Left cardiac atrium (tissue), 4 donors: ENCODE measurements at regions of chr5 and their contacts with region 1.

Region 1: DNA sequence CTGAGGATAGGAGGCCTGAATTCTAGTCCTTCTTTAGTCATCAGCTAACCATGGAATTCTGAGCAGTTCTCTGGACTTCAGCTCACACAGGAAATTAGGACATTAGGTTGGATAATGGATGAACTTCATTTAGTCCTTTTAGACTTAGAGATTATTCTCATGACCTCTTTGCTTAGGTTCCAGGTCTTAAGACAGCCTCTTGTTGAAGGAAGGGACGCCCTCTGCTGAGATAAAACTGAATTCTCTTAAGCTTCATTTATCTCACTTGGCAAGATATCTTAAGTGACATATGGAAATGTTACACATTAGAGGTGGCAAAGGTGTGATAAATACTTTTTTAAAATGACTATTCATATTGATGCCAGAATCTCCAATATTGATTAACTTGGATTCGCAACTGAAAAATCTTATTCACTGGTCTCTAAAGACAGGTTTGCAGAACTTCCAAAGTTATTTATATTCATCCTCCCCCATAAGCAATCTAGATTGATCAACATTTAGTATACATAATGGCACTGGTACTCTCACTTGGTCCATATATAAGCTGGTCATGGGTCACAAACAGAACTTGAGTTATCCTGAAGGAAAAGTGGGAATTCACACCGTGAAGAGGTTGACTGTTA is 16.9 kb upstream of the ZNF366 start:
- DNase-seq: no peak
- ATAC-seq: peak; percentile 68 to 76

Region 2: DNA sequence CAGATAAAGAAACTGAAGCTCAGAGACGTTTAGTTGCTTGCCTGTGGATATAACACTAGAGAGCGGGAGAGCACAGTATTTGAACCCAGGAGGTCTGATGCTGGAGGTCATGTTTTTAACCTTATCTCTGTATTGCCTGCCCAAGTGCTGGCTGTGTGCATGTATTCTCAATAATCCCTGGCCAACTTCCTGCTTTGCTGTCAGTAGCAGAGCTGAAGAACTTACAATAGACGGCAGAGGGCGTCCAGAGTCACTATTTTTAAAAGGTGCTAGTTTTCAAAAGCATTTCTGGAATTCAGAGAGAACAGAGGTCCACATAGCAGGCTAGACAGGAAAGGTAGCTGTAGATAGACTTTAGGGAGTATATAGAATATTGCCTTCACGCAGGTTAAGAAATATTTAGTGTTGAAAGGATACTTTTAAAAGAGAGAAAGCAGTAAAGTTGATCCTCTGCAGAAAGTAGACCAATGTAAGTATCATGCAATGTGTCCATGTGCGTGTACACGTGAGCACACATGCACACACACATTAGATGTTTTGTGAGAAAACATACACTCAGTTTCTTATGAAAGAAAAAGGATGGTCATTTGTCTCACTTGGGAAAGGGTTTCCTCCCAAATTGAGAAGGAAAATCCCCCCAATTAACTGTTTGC is 157.6 kb before region 1 on chr5:
- intact Hi-C with region 1: loop called (anchors 2 kb)
- DNase-seq: peak; percentile 71
- ATAC-seq: peak; percentile 87 to 91

Region 3: GRCh38 chr5:72569408-72569944 is 45.4 kb after region 1 on chr5:
- intact Hi-C with region 1: no loop called
- DNase-seq: no peak
- ATAC-seq: no peak

Region 4: GRCh38 chr5:72702871-72703434 is 178.9 kb after region 1 on chr5:
- intact Hi-C with region 1: no loop called
- DNase-seq: no peak
- ATAC-seq: no peak